Activated T-helper 2 cell treated with anti-CD3 and anti-CD28 coated beads, Interferon-gamma antibody, Interleukin-2, Interleukin-4, amounts not matched to agents 10 μg/mL and 5 μg/mL and 100 μg/mL, durations not matched to agents 14 hours and 24 hours and 36 hours (primary cell): ENCODE measurements at regions of chr1 and their contacts with region 1.

Region 1: GRCh38 chr1:116769561-116769977 is 15.3 kb downstream of the CD2 start:
- DNase-seq: peak; percentile 74
- H3K4me3 Mint-ChIP-seq: peak overlapping the region; percentile 66
- H3K27ac Mint-ChIP-seq: peak overlapping the region; percentile 100
- H3K4me1 Mint-ChIP-seq: peaks cover 89% of the 10 kb centered on the region
- H3K27me3 Mint-ChIP-seq: no peaks in the 10 kb centered on the region

Region 2: DNA sequence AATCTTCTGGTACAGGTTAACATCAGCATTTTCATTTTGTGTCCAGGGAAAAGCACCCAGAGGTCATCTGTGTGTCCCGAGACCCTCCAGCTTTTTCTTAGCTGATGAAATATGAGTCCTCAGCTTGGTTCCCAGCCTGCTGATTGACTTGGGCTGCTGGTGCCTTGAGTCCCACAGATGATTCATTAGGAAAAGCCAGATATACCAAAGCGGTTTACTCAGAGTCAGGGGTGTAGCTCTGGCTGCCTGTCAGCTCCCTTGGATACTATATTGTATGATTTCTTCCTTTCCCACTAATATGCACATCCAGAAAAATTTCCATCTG is 702.0 kb before region 1 on chr1:
- intact Hi-C with region 1: no loop called
- DNase-seq: no peak
- H3K4me3 Mint-ChIP-seq: no peak overlapping the region
- H3K27ac Mint-ChIP-seq: no peak overlapping the region
- H3K4me1 Mint-ChIP-seq: no peaks in the 10 kb centered on the region
- H3K27me3 Mint-ChIP-seq: peaks cover 18% of the 10 kb centered on the region

Region 3: GRCh38 chr1:116724765-116725375 is 44.7 kb before region 1 on chr1:
- intact Hi-C with region 1: loop called (anchors 5 kb)
- DNase-seq: peak; percentile 65
- H3K4me3 Mint-ChIP-seq: no peak overlapping the region
- H3K27ac Mint-ChIP-seq: no peak overlapping the region
- H3K4me1 Mint-ChIP-seq: peaks cover 33% of the 10 kb centered on the region
- H3K27me3 Mint-ChIP-seq: no peaks in the 10 kb centered on the region

Region 4: GRCh38 chr1:116754198-116754977 is 15.2 kb before region 1 on chr1 and contains the start of gene CD2:
- intact Hi-C with region 1: loop called (anchors 2 kb)
- DNase-seq: no peak
- H3K4me3 Mint-ChIP-seq: peak within 1 kb of the TSS; percentile 99
- H3K27ac Mint-ChIP-seq: peak within 1 kb of the TSS; percentile 97
- H3K4me1 Mint-ChIP-seq: peaks cover 32% of the 10 kb centered on the region
- H3K27me3 Mint-ChIP-seq: no peaks in the 10 kb centered on the region
- total RNA-seq, gene CD2: 284 and 304 TPM in 2 replicates

Region 5: GRCh38 chr1:116806245-116806644 is 36.7 kb after region 1 on chr1:
- intact Hi-C with region 1: loop called (anchors 1 kb)
- DNase-seq: peak; percentile 36
- H3K4me3 Mint-ChIP-seq: peak overlapping the region; percentile 79
- H3K27ac Mint-ChIP-seq: peak overlapping the region; percentile 90
- H3K4me1 Mint-ChIP-seq: peaks cover 84% of the 10 kb centered on the region
- H3K27me3 Mint-ChIP-seq: no peaks in the 10 kb centered on the region

Region 6: GRCh38 chr1:116817582-116818064 is 48.1 kb after region 1 on chr1:
- intact Hi-C with region 1: loop called (anchors 1 kb)
- DNase-seq: peak; percentile 58
- H3K4me3 Mint-ChIP-seq: no peak overlapping the region
- H3K27ac Mint-ChIP-seq: peak overlapping the region; percentile 61
- H3K4me1 Mint-ChIP-seq: peaks cover 50% of the 10 kb centered on the region
- H3K27me3 Mint-ChIP-seq: no peaks in the 10 kb centered on the region

Region 7: DNA sequence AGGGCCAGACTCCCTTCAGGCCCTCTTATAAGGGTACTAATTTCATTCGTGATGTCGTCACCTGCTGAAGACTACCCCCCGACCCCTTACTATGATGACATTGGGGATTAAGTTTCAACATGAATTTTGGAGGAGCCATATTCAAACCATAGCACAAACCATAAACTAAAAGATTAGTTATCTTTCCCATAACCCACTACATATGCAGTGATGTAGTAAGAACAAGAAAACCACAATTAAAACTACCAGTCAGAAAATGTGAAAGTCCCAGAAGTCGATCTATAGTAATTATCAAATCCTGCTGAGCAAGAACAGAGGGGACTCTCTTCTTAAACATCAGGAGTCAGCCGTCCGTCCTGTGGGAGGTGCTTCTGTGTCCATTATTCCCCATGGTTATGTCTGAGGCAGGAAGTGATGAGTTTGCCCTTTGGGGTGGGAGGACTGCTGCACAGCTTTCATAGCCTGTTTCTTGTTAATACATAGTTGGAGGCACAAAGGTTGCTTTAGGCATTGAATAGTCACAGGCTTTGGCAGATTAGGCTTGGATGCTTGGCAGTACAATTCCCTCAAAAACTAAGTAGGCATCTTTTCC is 104.2 kb after region 1 on chr1:
- intact Hi-C with region 1: loop called (anchors 1 kb)
- DNase-seq: no peak
- H3K4me3 Mint-ChIP-seq: peak overlapping the region; percentile 17
- H3K27ac Mint-ChIP-seq: peak overlapping the region; percentile 36
- H3K4me1 Mint-ChIP-seq: peaks cover 25% of the 10 kb centered on the region
- H3K27me3 Mint-ChIP-seq: peaks cover 2% of the 10 kb centered on the region